PC-9 (cell line): ENCODE measurements at regions of chr17 and their contacts with region 1.

Region 1: DNA sequence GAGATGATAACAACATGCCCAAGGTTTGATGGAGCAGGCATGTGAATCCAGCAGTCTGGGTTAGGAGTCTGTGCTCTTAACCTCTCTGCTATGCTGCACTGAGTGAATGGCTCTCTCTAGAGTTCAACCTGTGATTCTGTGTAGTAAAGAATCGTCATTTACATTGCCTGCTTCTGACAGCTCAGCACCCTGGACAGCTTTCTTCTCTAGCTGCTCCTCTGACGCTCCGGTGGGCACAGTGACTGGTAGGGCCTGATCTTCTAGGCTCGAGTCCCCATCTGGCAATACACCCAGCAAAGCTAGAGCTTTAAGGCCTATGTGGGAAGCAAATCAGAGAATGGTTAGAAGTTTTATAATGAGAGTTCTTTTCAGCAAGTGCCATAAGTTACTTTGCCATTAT is 85.3 kb upstream of the ATP2A3 start:
- DNase-seq: no peak
- H3K4me3 ChIP-seq: no peak overlapping the region
- H3K27ac ChIP-seq: no peak overlapping the region
- H3K4me1 ChIP-seq: no peaks in the 10 kb centered on the region
- H3K27me3 ChIP-seq: no peaks in the 10 kb centered on the region
- CTCF ChIP-seq: no peak

Region 2: GRCh38 chr17:3378321-3378720 is 671.2 kb before region 1 on chr17:
- CTCF ChIA-PET with region 1: no interaction called
- POLR2A ChIA-PET with region 1: no interaction called
- intact Hi-C with region 1: no loop called
- DNase-seq: no peak
- H3K4me3 ChIP-seq: no peak overlapping the region
- H3K27ac ChIP-seq: no peak overlapping the region
- H3K4me1 ChIP-seq: no peaks in the 10 kb centered on the region
- H3K27me3 ChIP-seq: peaks cover 61% of the 10 kb centered on the region
- CTCF ChIP-seq: no peak

Region 3: GRCh38 chr17:3965118-3965803 is 84.3 kb before region 1 on chr17:
- CTCF ChIA-PET with region 1: no interaction called
- POLR2A ChIA-PET with region 1: interaction called, 10 read pairs
- intact Hi-C with region 1: no loop called
- DNase-seq: peak; percentile 46 to 71
- H3K4me3 ChIP-seq: peak overlapping the region; percentile 66
- H3K27ac ChIP-seq: no peak overlapping the region
- H3K4me1 ChIP-seq: peaks cover 13% of the 10 kb centered on the region
- H3K27me3 ChIP-seq: no peaks in the 10 kb centered on the region
- CTCF ChIP-seq: no peak

Region 4: DNA sequence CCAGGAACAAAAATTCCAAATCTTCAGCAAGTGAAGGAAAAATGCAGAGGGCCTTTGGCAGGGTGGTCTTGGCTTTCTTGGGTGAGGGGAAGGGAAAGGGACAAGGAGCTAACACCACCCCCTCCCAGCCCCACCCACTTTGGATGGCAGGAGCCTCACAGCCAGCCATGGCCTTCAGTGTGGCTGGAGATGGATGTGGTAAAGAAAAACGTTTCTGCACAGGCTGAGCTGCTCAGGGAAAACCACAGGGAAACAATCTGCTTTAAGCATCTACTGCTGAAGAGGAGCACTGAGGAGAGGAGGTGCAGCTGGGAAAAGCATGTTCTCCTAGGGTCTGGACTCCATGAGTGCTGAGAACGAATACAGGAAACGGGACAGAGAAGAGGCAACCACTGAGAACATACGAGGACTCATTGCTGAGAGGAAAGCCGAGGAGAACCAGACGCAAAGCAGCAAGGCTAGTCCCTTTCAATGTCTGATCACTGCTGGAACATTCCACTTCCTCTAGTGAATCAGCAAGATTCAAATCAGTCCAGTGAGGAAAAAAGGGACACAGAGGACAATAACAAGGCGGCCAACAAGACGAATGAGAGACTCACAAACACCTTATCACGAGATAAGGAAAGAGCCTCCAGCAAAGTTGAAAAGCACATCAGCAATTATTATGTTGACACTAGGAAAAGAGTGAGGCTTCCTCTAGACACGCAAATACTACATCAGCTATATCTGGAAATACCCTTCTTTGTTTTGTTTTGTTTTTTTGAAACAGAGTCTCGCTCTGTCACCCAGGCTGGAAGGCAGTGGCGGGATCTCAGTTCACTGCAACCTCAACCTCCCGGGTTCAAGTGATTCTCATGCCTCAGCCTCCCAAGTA is 51.6 kb after region 1 on chr17:
- CTCF ChIA-PET with region 1: no interaction called
- POLR2A ChIA-PET with region 1: no interaction called
- intact Hi-C with region 1: no loop called
- DNase-seq: peak in 1 of 2 experiments; percentile 41
- H3K4me3 ChIP-seq: no peak overlapping the region
- H3K27ac ChIP-seq: peak overlapping the region; percentile 18; the same call in 1 of the 2 replicates
- H3K4me1 ChIP-seq: no peaks in the 10 kb centered on the region
- H3K27me3 ChIP-seq: no peaks in the 10 kb centered on the region
- CTCF ChIP-seq: no peak

Region 5: GRCh38 chr17:4229627-4230541 is 180.3 kb after region 1 on chr17:
- CTCF ChIA-PET with region 1: no interaction called
- POLR2A ChIA-PET with region 1: no interaction called
- intact Hi-C with region 1: no loop called
- DNase-seq: peak; percentile 35 to 73
- H3K4me3 ChIP-seq: no peak overlapping the region
- H3K27ac ChIP-seq: peak overlapping the region; percentile 22
- H3K4me1 ChIP-seq: peaks cover 15% of the 10 kb centered on the region
- H3K27me3 ChIP-seq: no peaks in the 10 kb centered on the region
- CTCF ChIP-seq: no peak